A673 (cell line): ENCODE measurements at regions of chr21 and their contacts with region 1.

Region 1: GRCh38 chr21:16241479-16241963 is 511.7 kb downstream of the USP25 start:
- DNase-seq: peak; percentile 79
- H3K4me3 ChIP-seq: no peak overlapping the region
- H3K27ac ChIP-seq: no peak overlapping the region
- H3K4me1 ChIP-seq: no peaks in the 10 kb centered on the region
- H3K27me3 ChIP-seq: peaks cover 21% of the 10 kb centered on the region
- CTCF ChIP-seq: no peak

Region 2: DNA sequence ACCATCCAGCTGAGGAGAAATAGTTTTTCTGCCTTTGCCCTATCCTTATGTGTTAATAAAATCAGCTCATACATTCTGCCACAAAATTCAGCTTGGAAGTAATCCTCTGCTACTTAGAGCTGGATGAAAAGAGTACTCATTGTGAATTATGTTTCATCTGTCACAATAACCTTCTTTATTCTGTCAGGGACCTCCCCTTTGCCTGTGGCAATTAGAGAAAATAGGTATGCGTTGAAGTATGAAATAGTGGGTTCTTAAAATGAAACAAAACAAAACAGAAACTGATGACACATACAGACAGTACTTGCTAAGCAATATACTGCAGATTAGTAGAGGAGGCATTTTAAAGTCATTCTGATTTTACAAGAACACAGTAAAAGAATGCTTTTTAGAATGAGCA is 66.7 kb after region 1 on chr21:
- CTCF ChIA-PET with region 1: no interaction called
- POLR2A ChIA-PET with region 1: no interaction called
- intact Hi-C with region 1: loop called (anchors 5 kb)
- DNase-seq: no peak
- H3K4me3 ChIP-seq: no peak overlapping the region
- H3K27ac ChIP-seq: no peak overlapping the region
- H3K4me1 ChIP-seq: peaks cover 4% of the 10 kb centered on the region
- H3K27me3 ChIP-seq: no peaks in the 10 kb centered on the region
- CTCF ChIP-seq: no peak

Region 3: GRCh38 chr21:16855164-16855667 is 613.7 kb after region 1 on chr21:
- CTCF ChIA-PET with region 1: no interaction called
- POLR2A ChIA-PET with region 1: no interaction called
- intact Hi-C with region 1: no loop called
- DNase-seq: no peak
- H3K4me3 ChIP-seq: no peak overlapping the region
- H3K27ac ChIP-seq: no peak overlapping the region
- H3K4me1 ChIP-seq: no peaks in the 10 kb centered on the region
- H3K27me3 ChIP-seq: no peaks in the 10 kb centered on the region
- CTCF ChIP-seq: no peak